ENCODE measurements at regions of chr1 and their contacts with region 1.

Region 1: GRCh38 chr1:220281159-220281574 is 8.9 kb upstream of the RAB3GAP2 start:
- DNase-seq: no peak
- H3K4me3 Mint-ChIP-seq: no peak overlapping the region
- H3K27ac Mint-ChIP-seq: no peak overlapping the region
- H3K4me1 Mint-ChIP-seq: no peaks in the 10 kb centered on the region
- H3K27me3 Mint-ChIP-seq: peaks cover 2% of the 10 kb centered on the region

Region 2: GRCh38 chr1:220269036-220269435 is 12.1 kb before region 1 on chr1:
- CTCF ChIA-PET with region 1: no interaction called
- intact Hi-C with region 1: no loop called
- DNase-seq: no peak
- H3K4me3 Mint-ChIP-seq: no peak overlapping the region
- H3K27ac Mint-ChIP-seq: no peak overlapping the region
- H3K4me1 Mint-ChIP-seq: peaks cover 29% of the 10 kb centered on the region
- H3K27me3 Mint-ChIP-seq: no peaks in the 10 kb centered on the region

Region 3: GRCh38 chr1:220296981-220297380 is 15.8 kb after region 1 on chr1:
- CTCF ChIA-PET with region 1: interaction called, 23 read pairs
- intact Hi-C with region 1: no loop called
- DNase-seq: no peak
- H3K4me3 Mint-ChIP-seq: no peak overlapping the region
- H3K27ac Mint-ChIP-seq: no peak overlapping the region
- H3K4me1 Mint-ChIP-seq: no peaks in the 10 kb centered on the region
- H3K27me3 Mint-ChIP-seq: peaks cover 8% of the 10 kb centered on the region

Region 4: GRCh38 chr1:221637641-221638041 is 1356.5 kb after region 1 on chr1:
- CTCF ChIA-PET with region 1: no interaction called
- intact Hi-C with region 1: no loop called
- DNase-seq: no peak
- H3K4me3 Mint-ChIP-seq: no peak overlapping the region
- H3K27ac Mint-ChIP-seq: no peak overlapping the region
- H3K4me1 Mint-ChIP-seq: no peaks in the 10 kb centered on the region
- H3K27me3 Mint-ChIP-seq: peaks cover 2% of the 10 kb centered on the region